ENCODE measurements at regions of chr14 and their contacts with region 1.

Region 1: DNA sequence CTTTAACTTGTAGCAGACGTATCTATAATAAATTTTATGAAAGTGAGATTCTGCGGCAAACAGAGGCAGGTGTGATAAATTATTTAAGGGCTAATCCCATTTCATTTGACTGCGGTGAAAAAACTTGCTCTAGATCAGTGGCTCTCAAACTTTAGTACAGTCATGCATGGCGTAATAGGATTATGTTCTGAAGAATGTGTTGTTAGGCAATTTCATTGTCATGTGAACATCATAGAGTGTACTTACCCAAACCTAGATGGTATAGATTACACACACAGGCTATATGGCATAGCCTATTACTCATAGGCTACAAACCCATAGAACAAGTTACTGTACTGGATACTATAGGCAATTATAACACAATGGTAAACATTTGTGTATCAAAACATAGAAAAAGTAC is 83.7 kb downstream of the HEATR5A start:
- DNase-seq: no peak
- ATAC-seq: no peak
- H3K4me3 ChIP-seq: no peak overlapping the region
- H3K4me3 Mint-ChIP-seq: no peak overlapping the region
- H3K27ac ChIP-seq: no peak overlapping the region
- H3K27ac Mint-ChIP-seq: no peak overlapping the region
- H3K4me1 ChIP-seq: no peaks in the 10 kb centered on the region
- H3K4me1 Mint-ChIP-seq: no peaks in the 10 kb centered on the region
- H3K27me3 ChIP-seq: no peaks in the 10 kb centered on the region
- H3K27me3 Mint-ChIP-seq: no peaks in the 10 kb centered on the region

Region 2: GRCh38 chr14:30553311-30553989 is 783.2 kb before region 1 on chr14:
- CTCF ChIA-PET with region 1: no interaction called
- POLR2A ChIA-PET with region 1: interaction called in 1 of 2 experiments, 10 read pairs
- DNase-seq: no peak
- ATAC-seq: no peak
- H3K4me3 ChIP-seq: no peak overlapping the region
- H3K4me3 Mint-ChIP-seq: no peak overlapping the region
- H3K27ac ChIP-seq: no peak overlapping the region
- H3K27ac Mint-ChIP-seq: no peak overlapping the region
- H3K4me1 ChIP-seq: peaks cover under 1 to 4% of the 10 kb centered on the region in 2 experiments
- H3K4me1 Mint-ChIP-seq: peaks cover 0 to 5% (median 4%) of the 10 kb centered on the region in 3 donors
- H3K27me3 ChIP-seq: peaks cover 0 to 4% of the 10 kb centered on the region in 2 experiments
- H3K27me3 Mint-ChIP-seq: peaks cover 14 to 16% of the 10 kb centered on the region in 2 donors

Region 3: GRCh38 chr14:31300296-31300695 is 36.4 kb before region 1 on chr14:
- CTCF ChIA-PET with region 1: no interaction called
- POLR2A ChIA-PET with region 1: no interaction called
- DNase-seq: no peak
- ATAC-seq: no peak
- H3K4me3 ChIP-seq: no peak overlapping the region
- H3K4me3 Mint-ChIP-seq: no peak overlapping the region
- H3K27ac ChIP-seq: no peak overlapping the region
- H3K27ac Mint-ChIP-seq: no peak overlapping the region
- H3K4me1 ChIP-seq: no peaks in the 10 kb centered on the region
- H3K4me1 Mint-ChIP-seq: no peaks in the 10 kb centered on the region
- H3K27me3 ChIP-seq: no peaks in the 10 kb centered on the region
- H3K27me3 Mint-ChIP-seq: no peaks in the 10 kb centered on the region

Region 4: GRCh38 chr14:31543969-31544799 is 207.5 kb after region 1 on chr14:
- CTCF ChIA-PET with region 1: interaction called in 1 of 2 experiments, 13 read pairs
- POLR2A ChIA-PET with region 1: no interaction called
- DNase-seq: peak in 1 of 35 experiments; percentile 17
- ATAC-seq: no peak
- H3K4me3 ChIP-seq: no peak overlapping the region
- H3K4me3 Mint-ChIP-seq: no peak overlapping the region
- H3K27ac ChIP-seq: no peak overlapping the region
- H3K27ac Mint-ChIP-seq: no peak overlapping the region
- H3K4me1 ChIP-seq: no peaks in the 10 kb centered on the region
- H3K4me1 Mint-ChIP-seq: no peaks in the 10 kb centered on the region
- H3K27me3 ChIP-seq: peaks cover 0 to 4% of the 10 kb centered on the region in 2 experiments
- H3K27me3 Mint-ChIP-seq: peaks cover 19 to 25% of the 10 kb centered on the region in 2 donors

Region 5: GRCh38 chr14:31977001-31977556 is 640.4 kb after region 1 on chr14:
- CTCF ChIA-PET with region 1: no interaction called
- POLR2A ChIA-PET with region 1: no interaction called
- DNase-seq: no peak
- ATAC-seq: no peak
- H3K4me3 ChIP-seq: no peak overlapping the region
- H3K4me3 Mint-ChIP-seq: no peak overlapping the region
- H3K27ac ChIP-seq: no peak overlapping the region
- H3K27ac Mint-ChIP-seq: no peak overlapping the region
- H3K4me1 ChIP-seq: no peaks in the 10 kb centered on the region
- H3K4me1 Mint-ChIP-seq: no peaks in the 10 kb centered on the region
- H3K27me3 ChIP-seq: peaks cover 0 to 13% of the 10 kb centered on the region in 2 experiments
- H3K27me3 Mint-ChIP-seq: no peaks in the 10 kb centered on the region